Activated T-helper 1 cell treated with anti-CD3 and anti-CD28 coated beads, Interleukin-12 subunit alpha, Interleukin-12 subunit beta, Interleukin-2, Interleukin-4 antibody, amounts not matched to agents 30 ng/mL and 10 ng/mL and 1 ng/mL, durations not matched to agents 14 hours and 24 hours and 36 hours (primary cell): ENCODE measurements at regions of chr1 and their contacts with region 1.

Region 1: DNA sequence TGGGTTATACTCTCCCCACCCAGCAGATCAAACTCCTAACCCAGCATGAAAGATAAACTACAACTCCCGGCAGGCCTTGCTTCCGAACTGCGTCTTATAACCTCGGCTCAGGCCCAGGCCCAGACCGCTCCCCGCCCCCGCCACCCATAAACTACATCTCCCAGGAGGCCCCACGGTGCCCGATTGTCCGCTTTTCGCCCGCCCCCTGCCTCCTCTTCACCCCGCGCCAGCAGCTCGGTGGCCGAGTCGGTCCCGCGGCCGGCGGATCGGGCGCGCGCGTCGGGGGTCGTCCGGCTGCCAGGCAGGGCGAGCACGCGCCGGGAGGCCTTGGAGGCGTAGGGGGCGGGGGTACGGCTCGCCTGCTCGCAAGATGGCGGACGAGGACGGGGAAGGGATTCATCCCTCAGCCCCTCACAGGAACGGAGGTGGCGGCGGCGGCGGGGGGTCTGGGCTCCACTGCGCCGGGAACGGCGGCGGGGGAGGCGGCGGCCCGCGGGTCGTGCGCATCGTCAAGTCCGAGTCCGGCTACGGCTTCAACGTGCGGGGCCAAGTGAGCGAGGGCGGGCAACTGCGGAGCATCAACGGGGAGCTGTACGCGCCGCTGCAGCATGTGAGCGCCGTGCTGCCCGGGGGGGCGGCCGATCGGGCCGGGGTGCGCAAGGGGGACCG is at the start of gene SNX27:
- DNase-seq: peak; percentile 80
- H3K4me3 Mint-ChIP-seq: peak within 1 kb of the TSS; percentile 99
- H3K27ac Mint-ChIP-seq: peak within 1 kb of the TSS; percentile 95
- H3K4me1 Mint-ChIP-seq: peaks cover 38% of the 10 kb centered on the region
- H3K27me3 Mint-ChIP-seq: peaks cover 5% of the 10 kb centered on the region
- total RNA-seq, gene SNX27: 31.1 and 31.9 TPM in 2 replicates

Region 2: GRCh38 chr1:151399890-151400495 is 212.0 kb before region 1 on chr1:
- intact Hi-C with region 1: loop called (anchors 1 kb)
- DNase-seq: no peak
- H3K4me3 Mint-ChIP-seq: peak overlapping the region; percentile 92
- H3K27ac Mint-ChIP-seq: peak overlapping the region; percentile 99
- H3K4me1 Mint-ChIP-seq: peaks cover 27% of the 10 kb centered on the region
- H3K27me3 Mint-ChIP-seq: peaks cover 3% of the 10 kb centered on the region

Region 3: DNA sequence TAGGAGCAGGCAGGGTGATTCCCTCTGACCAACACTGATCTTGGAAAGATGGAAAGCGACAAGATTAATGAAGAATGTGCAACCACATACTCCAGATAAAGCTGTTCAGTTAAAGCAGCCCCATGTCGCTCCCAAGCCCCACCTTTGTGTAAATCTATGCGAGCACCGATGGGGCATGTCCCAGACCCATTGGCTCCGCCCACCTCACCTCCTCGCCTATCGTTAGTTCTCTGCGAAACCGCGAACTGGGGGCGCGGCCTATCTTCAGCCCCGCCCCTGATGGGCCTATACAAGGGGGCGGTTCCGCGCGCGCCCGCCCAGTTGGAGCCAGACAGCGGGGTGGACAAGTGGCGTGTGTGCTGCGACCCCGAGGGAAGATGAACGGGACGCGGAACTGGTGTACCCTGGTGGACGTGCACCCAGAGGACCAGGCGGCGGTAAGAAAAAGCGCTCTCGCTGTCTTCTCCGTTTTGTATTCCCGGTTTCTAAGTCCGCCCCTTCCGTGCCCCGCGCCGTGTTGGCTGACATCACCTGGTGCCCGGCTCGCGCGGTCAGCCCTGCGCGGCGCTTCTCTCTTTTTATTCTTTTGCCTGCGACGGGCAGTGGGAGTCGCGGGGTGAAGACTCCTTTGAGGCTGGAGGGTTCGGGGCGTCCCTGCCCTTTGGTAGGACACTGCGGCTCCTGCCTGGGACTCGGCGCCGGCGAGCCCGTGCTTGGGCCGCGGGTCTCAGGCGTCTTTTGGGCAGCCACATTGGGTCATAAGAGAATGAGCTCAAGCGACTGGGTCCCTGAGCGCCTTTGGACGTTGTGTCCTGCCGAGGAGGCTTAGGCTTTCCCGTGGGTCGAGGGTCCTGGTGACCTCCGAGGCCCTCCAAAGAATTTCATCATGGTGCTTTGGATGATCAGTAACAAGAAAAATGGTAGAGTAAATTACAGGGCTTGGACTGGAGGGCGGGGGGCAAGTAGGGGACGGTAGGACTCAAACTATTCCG is 71.7 kb before region 1 on chr1 and contains the start of gene TUFT1:
- intact Hi-C with region 1: loop called (anchors 1 kb)
- DNase-seq: peak; percentile 91
- H3K4me3 Mint-ChIP-seq: peak within 1 kb of the TSS; percentile 91
- H3K27ac Mint-ChIP-seq: peak within 1 kb of the TSS; percentile 62
- H3K4me1 Mint-ChIP-seq: peaks cover 16% of the 10 kb centered on the region
- H3K27me3 Mint-ChIP-seq: peaks cover 10% of the 10 kb centered on the region
- total RNA-seq, gene TUFT1: 1.9 and 2.3 TPM in 2 replicates

Region 4: GRCh38 chr1:151720974-151721787 is 109.2 kb after region 1 on chr1 and contains the start of gene RIIAD1:
- intact Hi-C with region 1: loop called (anchors 2 kb)
- DNase-seq: peak; percentile 36
- H3K4me3 Mint-ChIP-seq: peak within 1 kb of the TSS; percentile 77
- H3K27ac Mint-ChIP-seq: no peak within 1 kb of the TSS
- H3K4me1 Mint-ChIP-seq: peaks cover 18% of the 10 kb centered on the region
- H3K27me3 Mint-ChIP-seq: peaks cover 76% of the 10 kb centered on the region
- total RNA-seq, gene RIIAD1: not detected in 2 replicates

Region 5: GRCh38 chr1:151739590-151740375 is 127.8 kb after region 1 on chr1:
- intact Hi-C with region 1: no loop called
- DNase-seq: no peak
- H3K4me3 Mint-ChIP-seq: no peak overlapping the region
- H3K27ac Mint-ChIP-seq: no peak overlapping the region
- H3K4me1 Mint-ChIP-seq: no peaks in the 10 kb centered on the region
- H3K27me3 Mint-ChIP-seq: peaks cover 8% of the 10 kb centered on the region

Region 6: DNA sequence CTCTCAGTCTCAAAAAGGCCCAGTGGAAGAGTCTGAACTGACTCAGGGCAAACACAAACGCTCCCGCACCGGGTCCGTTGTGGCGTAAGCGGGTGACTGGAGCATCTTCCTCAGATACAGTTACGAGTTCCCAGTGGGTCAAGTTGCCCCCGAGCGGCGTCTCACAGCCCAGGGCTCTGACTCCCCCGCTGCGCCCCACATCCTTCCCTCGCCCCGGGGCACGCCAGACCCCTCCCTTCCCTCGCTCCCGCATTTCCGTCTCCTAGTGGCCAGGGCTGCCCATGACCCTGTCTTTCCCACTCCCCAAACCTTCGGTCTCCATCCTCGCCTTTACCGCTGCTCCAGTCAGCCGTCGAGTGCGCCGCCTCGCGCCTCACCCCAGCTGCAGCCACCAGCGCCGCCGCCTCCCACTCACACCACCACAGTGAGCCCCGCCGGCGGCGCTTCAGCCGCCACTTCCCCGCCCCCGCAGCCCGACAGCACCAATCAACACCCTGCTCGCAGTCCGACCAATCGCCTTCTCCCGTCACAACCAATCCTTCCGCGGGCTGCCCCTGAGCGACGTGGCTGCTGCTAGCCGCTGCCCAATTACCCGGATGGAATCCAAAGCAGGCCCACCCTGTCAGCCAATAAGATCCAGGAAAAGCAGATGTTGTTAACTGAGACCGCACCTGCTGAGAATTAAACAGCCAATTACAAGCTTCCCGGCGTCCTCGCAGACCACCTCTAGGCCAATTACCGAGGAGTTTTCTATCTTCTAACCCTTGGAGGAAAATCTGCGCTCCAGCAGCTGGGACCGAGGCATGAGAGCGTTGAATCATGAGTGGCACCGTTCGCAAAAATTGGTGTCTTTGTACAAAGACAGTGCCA is 178.3 kb after region 1 on chr1 and contains the start of gene TDRKH:
- intact Hi-C with region 1: loop called (anchors 1 kb)
- DNase-seq: peak; percentile 98
- H3K4me3 Mint-ChIP-seq: peak within 1 kb of the TSS; percentile 95
- H3K27ac Mint-ChIP-seq: peak within 1 kb of the TSS; percentile 78
- H3K4me1 Mint-ChIP-seq: peaks cover 33% of the 10 kb centered on the region
- H3K27me3 Mint-ChIP-seq: peaks cover 2% of the 10 kb centered on the region
- total RNA-seq, gene TDRKH: 14.6 and 16.4 TPM in 2 replicates

Region 7: DNA sequence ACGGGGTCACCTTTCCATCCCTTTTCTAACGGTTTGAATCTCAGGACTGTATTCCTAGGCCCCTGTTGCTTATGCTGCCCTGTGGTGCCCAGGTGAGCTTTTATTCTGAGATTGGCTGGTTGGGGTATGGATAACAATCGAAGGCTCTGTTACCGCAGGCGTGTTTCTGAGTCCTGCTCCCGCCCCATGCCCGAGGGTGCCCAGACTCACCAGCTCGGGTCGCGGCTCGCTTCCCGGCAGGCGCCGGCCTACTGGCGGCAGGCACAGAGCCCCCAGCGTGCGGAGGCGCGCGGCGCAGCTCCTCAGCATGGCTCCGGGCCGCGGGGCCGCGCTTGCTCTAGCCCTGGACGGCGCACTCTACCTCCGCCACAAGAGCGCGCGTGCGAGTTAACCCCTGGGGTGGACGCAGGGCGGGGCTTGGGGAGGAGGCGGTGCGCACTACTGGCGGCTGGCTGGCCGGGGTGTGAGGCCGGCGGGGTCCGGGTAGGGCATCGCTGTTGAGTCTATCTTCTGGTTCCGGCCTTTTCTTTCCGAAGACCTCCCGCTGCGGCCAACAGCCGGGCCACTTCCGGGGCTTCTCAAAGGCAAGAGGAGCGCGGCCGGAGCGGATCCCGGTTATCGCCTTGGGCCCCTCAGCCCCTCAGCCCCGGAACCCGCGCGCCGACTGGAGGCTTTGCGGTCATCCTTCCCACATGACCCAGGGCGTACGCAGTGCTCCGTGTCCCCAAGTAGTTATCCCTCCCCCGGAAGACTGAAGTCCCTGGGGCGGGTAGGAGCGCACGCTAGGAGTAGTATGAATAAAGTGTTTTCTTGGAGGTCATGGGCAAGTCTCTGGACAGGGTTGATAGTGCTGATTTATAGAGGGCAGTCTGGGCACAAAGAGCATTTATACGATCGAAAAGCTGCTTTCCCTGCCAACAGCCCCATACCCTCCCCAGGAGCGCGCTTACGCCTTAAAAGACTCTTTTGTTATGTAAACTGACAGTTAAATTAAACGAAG is 297.5 kb after region 1 on chr1 and contains the start of gene THEM4:
- intact Hi-C with region 1: loop called (anchors 5 kb)
- DNase-seq: peak; percentile 87
- H3K4me3 Mint-ChIP-seq: peak within 1 kb of the TSS; percentile 80
- H3K27ac Mint-ChIP-seq: peak within 1 kb of the TSS; percentile 85
- H3K4me1 Mint-ChIP-seq: peaks cover 37% of the 10 kb centered on the region
- H3K27me3 Mint-ChIP-seq: peaks cover 5% of the 10 kb centered on the region
- total RNA-seq, gene THEM4: 24.7 and 27.5 TPM in 2 replicates